T-cell (primary cell): ENCODE measurements at regions of chr7 and their contacts with region 1.

Region 1: GRCh38 chr7:100611974-100612729 is at the start of gene MOSPD3:
- DNase-seq: peak; percentile 95 to 100 (median 97)
- ATAC-seq: peak; percentile 89 to 96 (median 94)
- H3K4me3 ChIP-seq: peak within 1 kb of the TSS; percentile 85 to 86
- H3K4me3 Mint-ChIP-seq: peak within 1 kb of the TSS; percentile 94 to 98 (median 97)
- H3K27ac ChIP-seq: peak within 1 kb of the TSS; percentile 93
- H3K27ac Mint-ChIP-seq: peak within 1 kb of the TSS; percentile 100
- H3K4me1 ChIP-seq: peaks cover 7 to 30% of the 10 kb centered on the region in 2 experiments
- H3K4me1 Mint-ChIP-seq: peaks cover 16 to 30% (median 23%) of the 10 kb centered on the region in 3 donors
- H3K27me3 ChIP-seq: no peaks in the 10 kb centered on the region
- H3K27me3 Mint-ChIP-seq: no peaks in the 10 kb centered on the region
- total RNA-seq, gene MOSPD3: 10.9 to 19.0 (median 16.3) TPM

Region 2: GRCh38 chr7:100586266-100587025 is 25.7 kb before region 1 on chr7 and contains the start of gene FBXO24:
- CTCF ChIA-PET with region 1: interaction called, 3 to 17 read pairs
- POLR2A ChIA-PET with region 1: interaction called, 8 to 9 read pairs
- DNase-seq: peak; percentile 98 to 100 (median 99)
- ATAC-seq: peak; percentile 79 to 85 (median 81)
- H3K4me3 ChIP-seq: peak within 1 kb of the TSS; percentile 73 to 94
- H3K4me3 Mint-ChIP-seq: peak within 1 kb of the TSS in 2 of 3 donors; percentile 96 to 97
- H3K27ac ChIP-seq: peak within 1 kb of the TSS; percentile 90
- H3K27ac Mint-ChIP-seq: peak within 1 kb of the TSS; percentile 95 to 97
- H3K4me1 ChIP-seq: peaks cover 18 to 49% of the 10 kb centered on the region in 2 experiments
- H3K4me1 Mint-ChIP-seq: peaks cover 18 to 35% (median 32%) of the 10 kb centered on the region in 3 donors
- H3K27me3 ChIP-seq: peaks cover 0 to 15% of the 10 kb centered on the region in 2 experiments
- H3K27me3 Mint-ChIP-seq: peaks cover 0 to 2% of the 10 kb centered on the region in 2 donors
- total RNA-seq, gene FBXO24: 0.70 to 1.7 (median 1.3) TPM